ENCODE measurements at regions of chr4 and their contacts with region 1.

Region 1: DNA sequence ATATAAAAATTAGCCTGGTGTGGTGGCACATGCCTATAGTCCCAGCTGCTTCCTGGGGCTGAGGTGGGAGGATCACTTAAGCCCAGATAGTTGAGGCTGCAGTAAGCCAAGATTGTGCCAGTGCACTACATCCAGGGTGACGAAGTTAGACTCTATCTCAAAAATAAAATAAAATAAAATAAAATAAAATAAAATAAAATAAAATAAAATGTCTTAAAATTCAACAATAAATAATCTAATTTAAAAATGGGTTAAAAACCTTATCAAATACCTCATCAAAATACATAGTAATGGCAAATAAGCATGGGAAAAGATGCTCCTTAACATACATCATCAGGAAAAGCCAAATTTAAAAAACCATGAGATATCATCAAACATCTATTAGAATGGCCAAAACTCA is 760.2 kb upstream of the AGA start:
- DNase-seq: no peak
- H3K4me3 ChIP-seq: no peak overlapping the region
- H3K27ac ChIP-seq: no peak overlapping the region
- H3K4me1 ChIP-seq: no peaks in the 10 kb centered on the region
- H3K27me3 ChIP-seq: no peaks in the 10 kb centered on the region
- CTCF ChIP-seq: no peak
- POLR2A ChIP-seq: no peak

Region 2: DNA sequence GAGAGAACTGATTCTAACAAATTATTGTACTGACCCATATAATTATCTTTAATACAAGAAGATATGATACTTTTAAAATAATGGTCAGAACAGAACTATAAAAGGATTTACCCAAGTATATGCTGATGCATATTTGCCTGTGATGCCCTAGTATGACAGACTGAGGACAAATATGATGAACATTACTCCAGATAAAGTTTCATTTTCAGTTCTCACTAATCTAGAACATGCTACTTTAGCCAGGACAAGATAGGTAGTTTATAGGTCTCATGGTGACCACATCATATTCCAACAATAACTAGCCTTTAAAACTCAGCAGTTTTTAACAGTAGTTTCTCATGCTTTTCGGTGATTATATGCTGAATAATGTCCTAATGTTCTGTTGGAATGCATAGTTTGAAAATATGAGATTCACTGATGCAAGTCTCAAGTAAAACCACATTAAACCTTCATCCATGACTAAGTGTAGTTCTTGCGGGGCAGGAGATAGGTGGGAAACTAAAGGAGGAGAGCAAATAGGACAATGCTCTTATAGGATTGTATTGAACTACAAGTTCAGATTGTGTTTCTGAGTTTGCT is 464.9 kb before region 1 on chr4:
- intact Hi-C with region 1: loop called (anchors 5 kb)
- DNase-seq: no peak
- H3K4me3 ChIP-seq: no peak overlapping the region
- H3K27ac ChIP-seq: no peak overlapping the region
- H3K4me1 ChIP-seq: no peaks in the 10 kb centered on the region
- H3K27me3 ChIP-seq: no peaks in the 10 kb centered on the region
- CTCF ChIP-seq: no peak
- POLR2A ChIP-seq: no peak

Region 3: DNA sequence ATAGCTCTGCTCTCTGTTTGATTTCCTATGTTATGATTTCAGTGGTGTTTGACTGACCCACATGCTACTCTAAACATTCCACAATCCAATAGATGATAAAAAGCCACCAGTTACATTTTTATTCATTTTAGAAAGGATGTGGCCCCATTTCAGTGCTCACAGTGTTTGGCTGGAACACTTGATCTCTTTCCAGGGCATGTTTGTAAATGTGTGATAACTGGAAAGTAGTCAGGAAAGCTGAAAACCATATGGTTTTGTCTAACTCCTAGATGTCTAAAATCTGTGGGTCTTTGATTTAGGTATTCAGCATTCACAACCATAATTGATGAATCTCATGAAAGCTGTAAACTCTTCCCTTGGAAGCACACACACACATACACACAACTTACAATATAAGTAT is 144.7 kb after region 1 on chr4:
- intact Hi-C with region 1: no loop called
- DNase-seq: no peak
- H3K4me3 ChIP-seq: no peak overlapping the region
- H3K27ac ChIP-seq: no peak overlapping the region
- H3K4me1 ChIP-seq: no peaks in the 10 kb centered on the region
- H3K27me3 ChIP-seq: no peaks in the 10 kb centered on the region
- CTCF ChIP-seq: no peak
- POLR2A ChIP-seq: no peak